Activated T-helper 2 cell treated with anti-CD3 and anti-CD28 coated beads, Interferon-gamma antibody, Interleukin-2, Interleukin-4, amounts not matched to agents 10 μg/mL and 5 μg/mL and 100 μg/mL, durations not matched to agents 14 hours and 24 hours and 36 hours (primary cell): ENCODE measurements at regions of chr9 and their contacts with region 1.

Region 1: DNA sequence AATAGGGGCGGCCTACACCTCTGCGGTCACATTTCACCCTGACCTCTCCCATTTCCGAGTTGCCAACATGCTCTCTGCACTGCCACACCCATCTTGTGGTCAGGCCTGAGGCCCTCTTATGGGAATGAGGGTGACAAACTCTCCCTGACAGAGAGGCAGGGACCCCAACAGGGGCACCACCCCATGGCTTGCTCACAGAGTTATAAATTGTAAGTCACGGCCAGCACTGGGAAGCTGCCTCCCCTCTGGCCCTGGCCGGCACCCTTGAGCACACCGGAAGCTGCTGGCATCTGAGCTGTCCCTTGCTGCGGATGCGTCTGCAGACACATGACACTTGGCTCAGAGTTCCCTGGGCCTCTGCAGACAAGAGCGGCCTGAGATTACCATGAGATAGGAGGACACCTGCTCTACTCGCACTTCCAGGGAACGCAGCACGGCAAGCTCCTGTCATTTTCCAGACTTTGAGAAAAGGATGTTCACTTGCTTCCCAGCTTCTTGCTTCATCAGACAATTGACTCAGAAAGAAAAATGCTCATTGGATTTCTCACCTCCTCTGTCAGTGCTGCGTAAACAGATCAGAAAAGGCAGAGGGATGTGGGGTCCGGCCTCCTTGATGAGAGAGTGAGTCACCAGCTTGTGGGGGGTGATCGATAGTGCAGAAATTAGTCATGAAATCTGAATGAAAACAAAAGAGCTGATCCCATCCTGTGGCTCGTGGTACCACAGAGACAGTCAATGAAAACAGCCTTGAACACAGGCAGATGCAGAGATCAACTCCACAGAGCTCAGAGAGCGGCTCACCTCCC is 269.8 kb downstream of the SYK start:
- DNase-seq: peak; percentile 62
- H3K4me3 Mint-ChIP-seq: peak overlapping the region; percentile 46
- H3K27ac Mint-ChIP-seq: peak overlapping the region; percentile 98
- H3K4me1 Mint-ChIP-seq: peaks cover 16% of the 10 kb centered on the region
- H3K27me3 Mint-ChIP-seq: no peaks in the 10 kb centered on the region

Region 2: GRCh38 chr9:91036826-91037510 is 34.4 kb before region 1 on chr9:
- intact Hi-C with region 1: no loop called
- DNase-seq: peak; percentile 79
- H3K4me3 Mint-ChIP-seq: peak overlapping the region; percentile 49
- H3K27ac Mint-ChIP-seq: peak overlapping the region; percentile 88
- H3K4me1 Mint-ChIP-seq: peaks cover 61% of the 10 kb centered on the region
- H3K27me3 Mint-ChIP-seq: no peaks in the 10 kb centered on the region

Region 3: DNA sequence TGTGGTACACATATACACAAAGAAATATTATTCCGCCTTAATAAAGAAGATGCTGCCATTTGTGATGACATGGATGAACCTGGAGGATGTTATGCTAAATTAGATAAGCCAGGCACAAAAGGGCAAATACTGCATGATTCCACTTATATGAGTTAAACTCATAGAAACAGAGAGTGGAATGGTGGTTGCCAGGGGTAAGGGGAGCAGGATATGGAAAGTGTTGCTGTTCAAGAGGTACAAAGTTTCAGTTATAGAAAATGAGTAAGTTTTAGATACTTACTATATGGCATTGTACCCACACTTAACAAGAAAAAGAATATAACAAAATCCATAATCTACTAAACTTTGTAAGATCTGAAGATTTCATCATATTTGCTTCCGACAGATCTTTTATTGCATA is 17.6 kb before region 1 on chr9:
- intact Hi-C with region 1: loop called (anchors 1 kb)
- DNase-seq: no peak
- H3K4me3 Mint-ChIP-seq: no peak overlapping the region
- H3K27ac Mint-ChIP-seq: peak overlapping the region; percentile 86
- H3K4me1 Mint-ChIP-seq: peaks cover 67% of the 10 kb centered on the region
- H3K27me3 Mint-ChIP-seq: no peaks in the 10 kb centered on the region

Region 4: GRCh38 chr9:91060503-91061343 is 10.7 kb before region 1 on chr9:
- intact Hi-C with region 1: loop called (anchors 1 kb)
- DNase-seq: no peak
- H3K4me3 Mint-ChIP-seq: peak overlapping the region; percentile 34
- H3K27ac Mint-ChIP-seq: peak overlapping the region; percentile 90
- H3K4me1 Mint-ChIP-seq: peaks cover 50% of the 10 kb centered on the region
- H3K27me3 Mint-ChIP-seq: no peaks in the 10 kb centered on the region

Region 5: DNA sequence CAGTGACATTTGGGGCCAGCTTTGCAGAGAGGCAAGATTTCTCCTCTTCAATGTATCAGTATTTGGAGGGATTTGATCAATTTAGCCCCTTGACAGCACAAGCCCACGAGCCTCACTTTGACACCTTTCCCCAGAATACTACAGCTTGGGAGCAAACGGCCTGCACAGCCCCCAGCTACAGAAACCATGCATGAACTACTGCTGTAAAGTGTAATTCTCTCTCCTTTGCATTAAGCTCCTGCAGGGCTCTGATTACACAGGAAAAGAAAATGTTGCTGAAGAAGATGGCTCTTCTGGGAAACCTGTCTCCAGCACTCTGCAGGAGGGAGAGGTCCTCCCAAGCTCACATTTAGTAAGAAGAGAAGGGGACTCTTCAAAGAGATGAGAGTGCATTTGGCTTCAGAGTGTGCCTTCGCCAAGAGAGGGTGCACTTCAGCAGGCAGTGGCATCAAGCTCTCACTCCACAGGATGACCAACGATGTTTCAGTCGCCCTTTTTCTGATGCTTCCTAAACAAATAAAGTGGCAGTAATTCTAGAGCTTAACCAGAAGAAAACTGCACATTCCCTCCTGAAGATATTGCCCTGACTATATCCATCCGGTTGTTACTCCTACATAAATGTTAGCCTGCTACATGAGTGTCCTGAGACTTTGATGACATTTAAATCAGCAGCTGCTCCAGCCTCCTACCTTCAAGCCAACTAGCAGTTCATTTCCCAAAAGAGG is 18.2 kb after region 1 on chr9:
- intact Hi-C with region 1: loop called (anchors 1 kb)
- DNase-seq: no peak
- H3K4me3 Mint-ChIP-seq: no peak overlapping the region
- H3K27ac Mint-ChIP-seq: peak overlapping the region; percentile 36
- H3K4me1 Mint-ChIP-seq: peaks cover 72% of the 10 kb centered on the region
- H3K27me3 Mint-ChIP-seq: no peaks in the 10 kb centered on the region

Region 6: GRCh38 chr9:91101611-91102168 is 30.3 kb after region 1 on chr9:
- intact Hi-C with region 1: loop called (anchors 2 kb)
- DNase-seq: peak; percentile 85
- H3K4me3 Mint-ChIP-seq: peak overlapping the region; percentile 78
- H3K27ac Mint-ChIP-seq: peak overlapping the region; percentile 93
- H3K4me1 Mint-ChIP-seq: peaks cover 64% of the 10 kb centered on the region
- H3K27me3 Mint-ChIP-seq: no peaks in the 10 kb centered on the region